GM10248 (cell line): ENCODE measurements at regions of chr3 and their contacts with region 1.

Region 1: GRCh38 chr3:132343018-132343612 is 25.9 kb downstream of the ACP3 start:
- DNase-seq: peak; percentile 25
- CTCF ChIP-seq: peak; percentile 65

Region 2: DNA sequence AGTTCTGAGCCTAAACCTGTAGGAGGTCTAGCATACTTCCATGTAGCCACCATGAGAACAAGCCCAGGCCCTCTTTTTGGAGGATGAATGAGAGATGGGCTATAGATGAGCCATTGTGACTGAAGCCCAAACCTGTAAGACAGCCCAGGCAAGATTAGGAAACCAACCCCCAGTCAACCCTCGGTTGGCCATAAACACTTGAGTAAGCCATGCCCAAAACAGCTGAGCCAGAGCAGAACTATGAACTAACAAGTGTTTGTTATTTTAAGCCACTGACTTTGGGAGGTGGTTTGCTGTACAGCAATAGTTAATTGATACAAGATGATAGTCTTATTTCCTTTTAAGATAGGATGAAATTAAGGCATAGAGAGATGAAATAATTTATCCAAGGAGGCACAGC is 295.9 kb before region 1 on chr3:
- CTCF ChIA-PET with region 1: no interaction called
- POLR2A ChIA-PET with region 1: no interaction called
- DNase-seq: no peak
- CTCF ChIP-seq: no peak

Region 3: GRCh38 chr3:132253262-132253878 is 89.7 kb before region 1 on chr3:
- CTCF ChIA-PET with region 1: interaction called, 60 read pairs
- POLR2A ChIA-PET with region 1: no interaction called
- DNase-seq: peak; percentile 59
- CTCF ChIP-seq: peak; percentile 66

Region 4: GRCh38 chr3:132325103-132325606 is 18.0 kb before region 1 on chr3:
- CTCF ChIA-PET with region 1: interaction called, 15 read pairs
- POLR2A ChIA-PET with region 1: no interaction called
- DNase-seq: no peak
- CTCF ChIP-seq: no peak

Region 5: DNA sequence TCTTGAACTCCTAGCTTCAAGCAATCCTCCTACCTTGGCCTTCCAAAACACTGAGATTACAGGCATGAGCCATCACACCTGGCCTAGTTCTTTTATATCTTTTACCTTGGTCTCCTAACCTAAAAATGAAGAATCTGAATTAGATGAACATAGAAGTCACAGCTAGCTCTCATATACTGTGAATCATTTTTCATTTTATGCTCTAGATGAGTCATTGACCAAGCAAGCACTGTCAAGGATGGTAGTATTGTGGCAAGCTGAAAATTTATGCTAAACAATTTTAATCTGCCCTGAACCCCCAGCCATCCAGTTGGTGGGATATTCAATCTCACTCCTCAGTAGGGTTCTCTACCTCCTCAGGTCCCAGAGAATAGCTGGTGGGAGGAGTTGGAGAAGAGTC is 25.8 kb after region 1 on chr3:
- CTCF ChIA-PET with region 1: interaction called, 103 read pairs
- POLR2A ChIA-PET with region 1: no interaction called
- DNase-seq: no peak
- CTCF ChIP-seq: no peak